ENCODE measurements at regions of chr11 and their contacts with region 1.

Region 1: DNA sequence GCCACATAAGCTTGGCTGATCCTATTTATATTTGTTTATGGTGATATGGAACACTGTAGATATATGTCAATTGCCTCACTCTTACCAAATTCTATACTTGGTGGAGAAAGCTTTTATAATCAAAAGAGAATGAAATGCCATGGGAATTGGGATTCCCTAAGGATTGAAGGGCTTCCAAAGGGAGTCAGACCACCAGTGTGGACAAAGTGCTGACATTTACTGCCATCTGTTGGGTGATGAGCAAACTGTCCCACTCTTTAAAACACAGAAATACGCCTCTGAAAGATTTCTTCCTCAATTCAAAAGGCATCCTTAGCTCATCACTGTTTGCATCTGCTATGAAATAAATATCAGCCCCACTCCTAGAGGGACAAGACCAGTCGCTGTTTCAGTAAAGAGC is 7.1 kb downstream of the SLC1A2 start:
- DNase-seq: peak in 1 of 9 experiments; percentile 14
- ATAC-seq: no peak
- H3K4me3 ChIP-seq: no peak overlapping the region
- H3K4me3 Mint-ChIP-seq: no peak overlapping the region
- H3K27ac ChIP-seq: no peak overlapping the region
- H3K27ac Mint-ChIP-seq: no peak overlapping the region
- H3K4me1 ChIP-seq: no peaks in the 10 kb centered on the region
- H3K4me1 Mint-ChIP-seq: no peaks in the 10 kb centered on the region
- H3K27me3 ChIP-seq: peaks cover 3 to 5% of the 10 kb centered on the region in 2 experiments
- H3K27me3 Mint-ChIP-seq: peaks cover 40% of the 10 kb centered on the region
- CTCF ChIP-seq: peak; percentile 17

Region 2: GRCh38 chr11:34512840-34513681 is 899.2 kb before region 1 on chr11:
- CTCF ChIA-PET with region 1: interaction called, 5 read pairs
- POLR2A ChIA-PET with region 1: no interaction called
- intact Hi-C with region 1: loop called in 1 of 2 experiments (anchors 10 kb)
- DNase-seq: peak; percentile 2 to 58 (median 28)
- ATAC-seq: peak; percentile 73
- H3K4me3 ChIP-seq: no peak overlapping the region
- H3K4me3 Mint-ChIP-seq: no peak overlapping the region
- H3K27ac ChIP-seq: no peak overlapping the region
- H3K27ac Mint-ChIP-seq: no peak overlapping the region
- H3K4me1 ChIP-seq: no peaks in the 10 kb centered on the region
- H3K4me1 Mint-ChIP-seq: no peaks in the 10 kb centered on the region
- H3K27me3 ChIP-seq: no peaks in the 10 kb centered on the region
- H3K27me3 Mint-ChIP-seq: no peaks in the 10 kb centered on the region
- CTCF ChIP-seq: peak; percentile 65

Region 3: DNA sequence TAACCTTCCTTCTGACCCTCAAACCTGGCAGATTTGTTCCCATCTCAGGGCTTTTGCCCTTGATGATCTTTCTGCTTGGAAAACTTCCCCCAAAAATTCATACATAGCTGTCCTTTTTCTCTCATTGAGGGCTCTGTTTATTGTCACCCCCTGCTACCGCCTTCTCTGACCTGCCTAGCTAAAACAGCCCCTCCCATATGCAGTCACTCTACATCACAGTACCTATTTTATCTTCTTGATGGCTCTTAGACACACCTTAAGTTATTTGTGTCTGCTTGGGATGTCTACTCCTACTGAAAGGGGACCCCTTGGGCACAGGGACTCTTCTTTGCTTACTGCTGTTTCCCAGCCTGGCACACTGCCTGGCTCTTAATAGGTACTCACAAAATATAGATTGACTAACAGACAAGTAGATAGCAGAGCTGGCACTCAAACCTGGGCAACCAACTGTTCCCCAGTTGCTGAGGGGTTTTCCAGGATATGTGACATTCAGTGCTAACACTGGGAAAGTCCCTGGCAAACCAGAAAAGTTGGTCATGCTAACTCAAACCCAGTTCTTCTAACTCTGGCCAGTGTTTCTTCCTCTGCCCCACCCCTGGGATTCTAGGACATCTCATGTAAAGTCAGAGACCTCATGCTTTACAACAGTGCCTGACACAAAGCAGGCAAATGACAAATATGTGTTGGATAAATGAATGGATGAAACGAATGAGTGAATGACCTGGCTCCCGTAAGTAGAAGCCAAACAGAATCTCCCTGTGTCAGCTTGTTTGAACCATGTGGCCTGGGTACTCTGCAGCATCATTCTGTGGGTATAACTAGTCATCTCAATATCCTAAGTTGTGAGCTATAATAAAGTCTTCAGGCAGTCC is 186.2 kb after region 1 on chr11:
- CTCF ChIA-PET with region 1: no interaction called
- POLR2A ChIA-PET with region 1: no interaction called
- intact Hi-C with region 1: no loop called
- DNase-seq: no peak
- ATAC-seq: no peak
- H3K4me3 ChIP-seq: no peak overlapping the region
- H3K4me3 Mint-ChIP-seq: no peak overlapping the region
- H3K27ac ChIP-seq: no peak overlapping the region
- H3K27ac Mint-ChIP-seq: no peak overlapping the region
- H3K4me1 ChIP-seq: no peaks in the 10 kb centered on the region
- H3K4me1 Mint-ChIP-seq: no peaks in the 10 kb centered on the region
- H3K27me3 ChIP-seq: no peaks in the 10 kb centered on the region
- H3K27me3 Mint-ChIP-seq: peaks cover 46% of the 10 kb centered on the region
- CTCF ChIP-seq: no peak

Measured in CD8-positive, alpha-beta T cell (primary cell).